ENCODE measurements at regions of chr17 and their contacts with region 1.

Region 1: GRCh38 chr17:42843358-42843934 is 934 bp upstream of the AOC2 start:
- DNase-seq: no peak
- H3K4me3 ChIP-seq: no peak overlapping the region
- H3K27me3 ChIP-seq: no peaks in the 10 kb centered on the region
- CTCF ChIP-seq: peak; percentile 98

Region 2: GRCh38 chr17:42928714-42929496 is 85.5 kb after region 1 on chr17:
- CTCF ChIA-PET with region 1: interaction called, 61 read pairs
- POLR2A ChIA-PET with region 1: no interaction called
- DNase-seq: peak; percentile 9
- H3K4me3 ChIP-seq: no peak overlapping the region
- H3K27me3 ChIP-seq: peaks cover under 1% of the 10 kb centered on the region; the same call in 1 of the 2 replicates
- CTCF ChIP-seq: peak; percentile 50

Region 3: GRCh38 chr17:42937712-42938596 is 94.5 kb after region 1 on chr17:
- CTCF ChIA-PET with region 1: interaction called, 62 read pairs
- POLR2A ChIA-PET with region 1: no interaction called
- DNase-seq: peak; percentile 2
- H3K4me3 ChIP-seq: no peak overlapping the region
- H3K27me3 ChIP-seq: peaks cover 2% of the 10 kb centered on the region; the same call in 1 of the 2 replicates
- CTCF ChIP-seq: peak; percentile 73

Region 4: GRCh38 chr17:42997984-42998938 is 154.8 kb after region 1 on chr17 and contains the start of gene RPL27:
- CTCF ChIA-PET with region 1: interaction called, 16 read pairs
- POLR2A ChIA-PET with region 1: no interaction called
- DNase-seq: peak; percentile 100
- H3K4me3 ChIP-seq: peak within 1 kb of the TSS; percentile 91
- H3K27me3 ChIP-seq: no peaks in the 10 kb centered on the region
- CTCF ChIP-seq: peak; percentile 81
- polyA plus RNA-seq, gene RPL27: 3,309 and 5,343 TPM in 2 replicates

Measured in BJ (cell line).